GM12878 (cell line): ENCODE measurements at regions of chr15 and their contacts with region 1.

Region 1: GRCh38 chr15:97140216-97140615 is 809.7 kb downstream of the NR2F2 start:
- DNase-seq: no peak
- ATAC-seq: peak; percentile 71
- H3K4me3 ChIP-seq: no peak overlapping the region
- H3K27ac ChIP-seq: no peak overlapping the region
- H3K4me1 ChIP-seq: no peaks in the 10 kb centered on the region
- H3K27me3 ChIP-seq: no peaks in the 10 kb centered on the region
- CTCF ChIP-seq: no peak; a peak in 1 of 6 replicates
- EP300 ChIP-seq: no peak; a peak in 1 of 4 replicates
- POLR2A ChIP-seq: no peak
- RAD21 ChIP-seq: no peak

Region 2: GRCh38 chr15:96992817-96993216 is 147.4 kb before region 1 on chr15:
- CTCF ChIA-PET with region 1: no interaction called
- POLR2A ChIA-PET with region 1: no interaction called
- RAD21 ChIA-PET with region 1: no interaction called
- SMC1A ChIA-PET with region 1: no interaction called
- in situ Hi-C with region 1: no loop called
- intact Hi-C with region 1: no loop called
- DNase-seq: no peak
- ATAC-seq: peak; percentile 69
- H3K4me3 ChIP-seq: no peak overlapping the region
- H3K27ac ChIP-seq: no peak overlapping the region
- H3K4me1 ChIP-seq: no peaks in the 10 kb centered on the region
- H3K27me3 ChIP-seq: no peaks in the 10 kb centered on the region
- CTCF ChIP-seq: no peak
- EP300 ChIP-seq: no peak
- POLR2A ChIP-seq: no peak
- RAD21 ChIP-seq: no peak

Region 3: GRCh38 chr15:97092656-97093055 is 47.6 kb before region 1 on chr15:
- CTCF ChIA-PET with region 1: no interaction called
- POLR2A ChIA-PET with region 1: no interaction called
- RAD21 ChIA-PET with region 1: no interaction called
- SMC1A ChIA-PET with region 1: no interaction called
- in situ Hi-C with region 1: no loop called
- intact Hi-C with region 1: no loop called
- DNase-seq: no peak
- ATAC-seq: no peak
- H3K4me3 ChIP-seq: no peak overlapping the region
- H3K27ac ChIP-seq: no peak overlapping the region
- H3K4me1 ChIP-seq: no peaks in the 10 kb centered on the region
- H3K27me3 ChIP-seq: no peaks in the 10 kb centered on the region
- CTCF ChIP-seq: no peak
- EP300 ChIP-seq: no peak
- POLR2A ChIP-seq: no peak
- RAD21 ChIP-seq: no peak

Region 4: GRCh38 chr15:97126553-97127233 is 13.5 kb before region 1 on chr15:
- CTCF ChIA-PET with region 1: interaction called, 4 read pairs
- POLR2A ChIA-PET with region 1: interaction called, 7 read pairs
- RAD21 ChIA-PET with region 1: no interaction called
- SMC1A ChIA-PET with region 1: interaction called, 21 read pairs
- in situ Hi-C with region 1: no loop called
- intact Hi-C with region 1: no loop called
- DNase-seq: no peak
- ATAC-seq: peak; percentile 54
- H3K4me3 ChIP-seq: no peak overlapping the region
- H3K27ac ChIP-seq: no peak overlapping the region
- H3K4me1 ChIP-seq: no peaks in the 10 kb centered on the region
- H3K27me3 ChIP-seq: no peaks in the 10 kb centered on the region
- CTCF ChIP-seq: no peak
- EP300 ChIP-seq: no peak
- POLR2A ChIP-seq: no peak
- RAD21 ChIP-seq: no peak

Region 5: GRCh38 chr15:97159056-97159455 is 18.8 kb after region 1 on chr15:
- CTCF ChIA-PET with region 1: no interaction called
- POLR2A ChIA-PET with region 1: interaction called, 3 read pairs
- RAD21 ChIA-PET with region 1: no interaction called
- SMC1A ChIA-PET with region 1: interaction called, 21 read pairs
- in situ Hi-C with region 1: no loop called
- intact Hi-C with region 1: no loop called
- DNase-seq: no peak
- ATAC-seq: no peak
- H3K4me3 ChIP-seq: no peak overlapping the region
- H3K27ac ChIP-seq: no peak overlapping the region
- H3K4me1 ChIP-seq: no peaks in the 10 kb centered on the region
- H3K27me3 ChIP-seq: no peaks in the 10 kb centered on the region
- CTCF ChIP-seq: no peak
- EP300 ChIP-seq: no peak
- POLR2A ChIP-seq: no peak
- RAD21 ChIP-seq: no peak